SK-N-SH (cell line): ENCODE measurements at regions of chr12 and their contacts with region 1.

Region 1: GRCh38 chr12:13255792-13256691 is 59.5 kb downstream of the EMP1 start:
- DNase-seq: peak; percentile 87
- H3K4me3 ChIP-seq: peak overlapping the region; percentile 30 to 59; a peak in 3 of 4 replicates
- H3K27ac ChIP-seq: no peak overlapping the region
- H3K4me1 ChIP-seq: peaks cover 0 to 4% of the 10 kb centered on the region in 2 experiments; a peak in 1 of 4 replicates
- H3K27me3 ChIP-seq: no peaks in the 10 kb centered on the region; the same call in 1 of the 2 replicates
- CTCF ChIP-seq: peak; percentile 99
- EP300 ChIP-seq: peak in 1 of 2 experiments; percentile 16; a peak in 1 of 4 replicates
- RAD21 ChIP-seq: peak; percentile 75

Region 2: GRCh38 chr12:12182703-12183365 is 1073.2 kb before region 1 on chr12:
- CTCF ChIA-PET with region 1: no interaction called
- POLR2A ChIA-PET with region 1: no interaction called
- DNase-seq: no peak
- H3K4me3 ChIP-seq: no peak overlapping the region; a peak in 2 of 4 replicates
- H3K27ac ChIP-seq: peak overlapping the region; percentile 71 to 79
- H3K4me1 ChIP-seq: peaks cover 11 to 22% of the 10 kb centered on the region in 2 experiments
- H3K27me3 ChIP-seq: no peaks in the 10 kb centered on the region
- CTCF ChIP-seq: no peak
- EP300 ChIP-seq: peak in 1 of 2 experiments; percentile 47; a peak in 1 of 4 replicates
- RAD21 ChIP-seq: no peak

Region 3: GRCh38 chr12:13268581-13268980 is 12.5 kb after region 1 on chr12:
- CTCF ChIA-PET with region 1: interaction called, 66 read pairs
- POLR2A ChIA-PET with region 1: no interaction called
- DNase-seq: no peak
- H3K4me3 ChIP-seq: no peak overlapping the region
- H3K27ac ChIP-seq: no peak overlapping the region
- H3K4me1 ChIP-seq: no peaks in the 10 kb centered on the region
- H3K27me3 ChIP-seq: peaks cover 31% of the 10 kb centered on the region; the same call in 1 of the 2 replicates
- CTCF ChIP-seq: no peak
- EP300 ChIP-seq: no peak
- RAD21 ChIP-seq: no peak

Region 4: GRCh38 chr12:13278249-13278787 is 22.3 kb after region 1 on chr12:
- CTCF ChIA-PET with region 1: interaction called, 66 read pairs
- POLR2A ChIA-PET with region 1: no interaction called
- DNase-seq: peak; percentile 87
- H3K4me3 ChIP-seq: peak overlapping the region in 1 of 2 experiments; percentile 62; a peak in 1 of 4 replicates
- H3K27ac ChIP-seq: no peak overlapping the region
- H3K4me1 ChIP-seq: peaks cover 0 to 4% of the 10 kb centered on the region in 2 experiments; a peak in 1 of 4 replicates
- H3K27me3 ChIP-seq: peaks cover 47% of the 10 kb centered on the region; the same call in 1 of the 2 replicates
- CTCF ChIP-seq: peak; percentile 97
- EP300 ChIP-seq: no peak
- RAD21 ChIP-seq: peak; percentile 73

Region 5: DNA sequence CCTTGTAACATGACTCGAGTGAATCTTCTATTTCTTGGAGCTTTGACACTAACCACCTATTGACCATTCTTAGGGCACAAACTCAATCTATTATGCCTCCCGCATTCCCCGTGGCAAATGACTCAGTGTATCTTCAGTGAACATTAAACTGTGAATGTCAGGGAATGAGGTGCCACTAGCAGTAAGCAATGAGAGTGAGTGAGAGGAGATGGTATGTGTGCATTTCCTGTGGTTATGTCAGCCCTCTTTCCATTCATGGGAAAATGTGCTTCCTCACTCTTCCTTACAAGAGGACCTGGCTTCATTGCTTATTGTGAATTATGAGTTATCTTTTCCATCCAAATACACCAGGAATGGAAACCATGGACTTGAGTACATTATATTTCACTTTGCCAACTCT is 169.7 kb after region 1 on chr12:
- CTCF ChIA-PET with region 1: no interaction called
- POLR2A ChIA-PET with region 1: no interaction called
- DNase-seq: no peak
- H3K4me3 ChIP-seq: no peak overlapping the region
- H3K27ac ChIP-seq: peak overlapping the region in 1 of 2 experiments; percentile 48; a peak in 2 of 4 replicates
- H3K4me1 ChIP-seq: no peaks in the 10 kb centered on the region
- H3K27me3 ChIP-seq: no peaks in the 10 kb centered on the region
- CTCF ChIP-seq: no peak
- EP300 ChIP-seq: no peak
- RAD21 ChIP-seq: no peak